ENCODE measurements at regions of chrX and their contacts with region 1.

Region 1: GRCh38 chrX:118853596-118853995 is 30.0 kb downstream of the ZCCHC12 start:
- DNase-seq: no peak
- H3K4me3 ChIP-seq: no peak overlapping the region
- CTCF ChIP-seq: no peak
- POLR2A ChIP-seq: no peak

Region 2: GRCh38 chrX:119004920-119005524 is 151.4 kb after region 1 on chrX:
- intact Hi-C with region 1: loop called (anchors 5 kb)
- DNase-seq: peak in 1 of 2 donors; percentile 13
- H3K4me3 ChIP-seq: no peak overlapping the region
- CTCF ChIP-seq: peak in 1 of 3 donors; percentile 32
- POLR2A ChIP-seq: no peak

Measured in lower leg skin (tissue), 4 donors.